ENCODE measurements at regions of chr1 and their contacts with region 1.

Region 1: GRCh38 chr1:206663832-206664652 is 20.7 kb upstream of the MAPKAPK2 start:
- DNase-seq: peak; percentile 44 to 83 (median 68)
- ATAC-seq: peak; percentile 87
- H3K4me3 ChIP-seq: no peak overlapping the region
- H3K4me3 Mint-ChIP-seq: peak overlapping the region in 4 of 10 donors; percentile 19 to 63 (median 41)
- H3K27ac ChIP-seq: no peak overlapping the region
- H3K27ac Mint-ChIP-seq: peak overlapping the region in 1 of 9 donors; percentile 15
- H3K4me1 ChIP-seq: peaks cover 0 to 9% of the 10 kb centered on the region in 2 donors
- H3K4me1 Mint-ChIP-seq: peaks cover 3 to 35% (median 9%) of the 10 kb centered on the region in 7 donors
- H3K27me3 ChIP-seq: peaks cover 0 to 6% of the 10 kb centered on the region in 2 donors
- H3K27me3 Mint-ChIP-seq: peaks cover 8 to 31% (median 21%) of the 10 kb centered on the region in 5 donors

Region 2: DNA sequence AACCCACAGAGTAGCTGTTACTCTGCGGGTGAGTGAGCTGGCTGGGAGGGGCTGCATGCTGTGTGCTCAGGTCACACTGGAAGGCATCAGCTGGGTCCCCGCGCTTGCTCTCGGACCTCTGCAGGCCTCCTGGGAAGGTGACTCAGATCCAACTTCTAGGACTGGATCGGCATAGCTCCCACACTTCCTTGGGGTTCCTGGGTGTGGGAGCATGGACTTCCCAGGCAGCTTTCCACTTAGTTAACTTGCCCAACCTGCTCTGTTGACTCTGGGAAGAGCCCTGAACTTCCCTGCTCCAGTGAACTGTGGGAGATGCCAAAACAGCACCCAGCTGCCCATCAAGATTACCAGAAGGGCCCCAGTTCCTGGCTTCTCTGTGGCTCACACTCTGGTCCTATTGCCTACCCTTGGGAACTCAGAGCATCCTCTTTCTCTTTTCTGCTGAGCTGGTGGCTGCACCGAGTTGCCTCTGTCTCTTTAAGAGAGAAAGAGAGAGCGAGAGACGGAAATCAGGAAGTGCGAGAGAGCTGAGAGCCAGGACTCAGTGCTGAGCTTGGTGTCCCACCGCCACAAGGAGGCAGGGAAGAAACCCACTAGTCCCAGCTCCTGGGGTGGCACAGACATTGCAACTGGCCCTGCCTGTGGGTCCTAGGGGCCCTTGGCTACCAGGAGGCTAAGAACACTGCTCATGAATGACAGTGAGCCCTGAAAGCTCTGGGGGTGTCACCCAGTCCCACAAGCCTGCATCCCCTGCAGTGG is 193.9 kb before region 1 on chr1 and contains the start of gene IKBKE:
- CTCF ChIA-PET with region 1: interaction called, 23 read pairs
- POLR2A ChIA-PET with region 1: no interaction called
- intact Hi-C with region 1: no loop called
- DNase-seq: peak in 8 of 9 donors; percentile 37 to 58 (median 44)
- ATAC-seq: peak; percentile 74
- H3K4me3 ChIP-seq: peak within 1 kb of the TSS; percentile 98
- H3K4me3 Mint-ChIP-seq: peak within 1 kb of the TSS; percentile 88 to 95 (median 93)
- H3K27ac ChIP-seq: peak within 1 kb of the TSS; percentile 78
- H3K27ac Mint-ChIP-seq: peak within 1 kb of the TSS; percentile 75 to 97 (median 86)
- H3K4me1 ChIP-seq: peaks cover 64 to 66% of the 10 kb centered on the region in 2 donors
- H3K4me1 Mint-ChIP-seq: peaks cover 55 to 86% (median 78%) of the 10 kb centered on the region in 7 donors
- H3K27me3 ChIP-seq: no peaks in the 10 kb centered on the region
- H3K27me3 Mint-ChIP-seq: no peaks in the 10 kb centered on the region
- total RNA-seq, gene IKBKE: 50.1 to 177 (median 79.1) TPM

Region 3: GRCh38 chr1:206489980-206490770 is 173.9 kb before region 1 on chr1:
- CTCF ChIA-PET with region 1: interaction called, 12 read pairs
- POLR2A ChIA-PET with region 1: interaction called, 4 read pairs
- intact Hi-C with region 1: loop called (anchors 1 kb)
- DNase-seq: peak; percentile 39 to 78 (median 58)
- ATAC-seq: peak; percentile 90
- H3K4me3 ChIP-seq: no peak overlapping the region
- H3K4me3 Mint-ChIP-seq: no peak overlapping the region
- H3K27ac ChIP-seq: no peak overlapping the region
- H3K27ac Mint-ChIP-seq: peak overlapping the region in 5 of 9 donors; percentile 8 to 67 (median 51)
- H3K4me1 ChIP-seq: no peaks in the 10 kb centered on the region
- H3K4me1 Mint-ChIP-seq: peaks cover 0 to 23% (median 0%) of the 10 kb centered on the region in 7 donors
- H3K27me3 ChIP-seq: no peaks in the 10 kb centered on the region
- H3K27me3 Mint-ChIP-seq: no peaks in the 10 kb centered on the region

Region 4: DNA sequence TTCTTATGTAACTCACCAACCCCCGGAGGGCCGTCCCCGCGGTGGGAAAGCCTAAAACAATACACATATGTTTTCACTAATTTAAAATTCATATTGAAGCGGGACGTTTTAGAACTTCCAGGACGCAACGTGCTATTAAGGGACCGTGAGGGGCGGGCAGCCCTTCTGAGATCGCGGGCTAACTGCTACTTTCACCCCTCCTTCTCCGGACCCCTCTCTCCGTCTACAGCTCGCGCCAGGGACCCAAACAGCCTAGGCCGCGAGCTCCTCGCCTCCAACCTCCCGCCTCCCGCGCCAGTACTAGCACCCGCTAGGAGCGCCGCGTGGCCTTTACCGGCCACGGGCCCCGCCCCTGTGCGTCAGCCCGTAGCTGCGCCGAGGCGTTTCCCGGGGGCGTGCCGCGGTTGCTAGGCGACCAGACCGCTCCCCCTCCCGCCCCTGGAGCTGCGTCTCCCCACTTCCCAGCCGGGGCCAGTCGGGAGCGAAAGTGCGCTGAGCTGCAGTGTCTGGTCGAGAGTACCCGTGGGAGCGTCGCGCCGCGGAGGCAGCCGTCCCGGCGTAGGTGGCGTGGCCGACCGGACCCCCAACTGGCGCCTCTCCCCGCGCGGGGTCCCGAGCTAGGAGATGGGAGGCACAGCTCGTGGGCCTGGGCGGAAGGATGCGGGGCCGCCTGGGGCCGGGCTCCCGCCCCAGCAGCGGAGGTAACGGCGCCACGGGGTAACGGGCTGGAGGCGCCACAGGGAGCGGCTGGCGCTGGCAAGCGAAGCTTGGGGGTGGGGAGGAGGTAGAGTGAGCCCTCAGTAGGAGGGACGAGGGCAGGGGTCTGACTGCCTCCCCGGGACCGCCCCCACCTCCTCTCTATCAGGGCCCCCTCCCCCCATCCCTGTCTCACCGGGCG is 28.7 kb before region 1 on chr1 and contains the start of gene DYRK3:
- CTCF ChIA-PET with region 1: interaction called, 53 read pairs
- POLR2A ChIA-PET with region 1: no interaction called
- intact Hi-C with region 1: loop called (anchors 1 kb)
- DNase-seq: peak; percentile 71 to 98 (median 80)
- ATAC-seq: peak; percentile 97
- H3K4me3 ChIP-seq: peak within 1 kb of the TSS; percentile 67
- H3K4me3 Mint-ChIP-seq: peak within 1 kb of the TSS; percentile 85 to 96 (median 90)
- H3K27ac ChIP-seq: peak within 1 kb of the TSS; percentile 57
- H3K27ac Mint-ChIP-seq: peak within 1 kb of the TSS; percentile 64 to 93 (median 85)
- H3K4me1 ChIP-seq: peaks cover 8 to 16% of the 10 kb centered on the region in 2 donors
- H3K4me1 Mint-ChIP-seq: peaks cover 14 to 29% (median 18%) of the 10 kb centered on the region in 7 donors
- H3K27me3 ChIP-seq: no peaks in the 10 kb centered on the region
- H3K27me3 Mint-ChIP-seq: peaks cover 7 to 13% (median 9%) of the 10 kb centered on the region in 5 donors
- total RNA-seq, gene DYRK3: 0.22 to 8.2 (median 0.69) TPM

Region 5: DNA sequence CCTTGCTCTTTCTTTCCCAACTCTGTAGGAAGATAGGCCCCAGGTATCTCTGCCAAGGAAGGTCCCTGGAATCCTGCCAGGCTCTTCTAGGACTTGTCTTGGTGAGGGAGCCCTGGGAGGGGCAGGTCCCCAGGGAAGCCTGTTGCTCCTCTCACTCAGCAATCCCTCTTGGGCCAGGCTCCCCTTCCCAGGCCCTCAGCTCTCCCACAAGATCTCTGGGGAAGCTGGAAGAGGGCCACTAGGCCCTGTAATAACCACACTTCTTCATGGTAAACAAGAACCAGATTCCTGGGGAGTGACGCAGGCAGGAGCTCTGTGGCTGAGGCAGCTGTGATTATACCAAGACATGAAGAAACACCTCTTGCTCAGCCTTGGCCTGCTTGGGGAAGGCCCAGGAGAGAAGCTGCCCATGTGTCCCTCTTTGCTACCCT is 10.7 kb after region 1 on chr1:
- CTCF ChIA-PET with region 1: interaction called, 14 read pairs
- POLR2A ChIA-PET with region 1: no interaction called
- intact Hi-C with region 1: no loop called
- DNase-seq: no peak
- ATAC-seq: no peak
- H3K4me3 ChIP-seq: no peak overlapping the region
- H3K4me3 Mint-ChIP-seq: no peak overlapping the region
- H3K27ac ChIP-seq: no peak overlapping the region
- H3K27ac Mint-ChIP-seq: no peak overlapping the region
- H3K4me1 ChIP-seq: no peaks in the 10 kb centered on the region
- H3K4me1 Mint-ChIP-seq: peaks cover 0 to 5% (median 0%) of the 10 kb centered on the region in 7 donors
- H3K27me3 ChIP-seq: no peaks in the 10 kb centered on the region
- H3K27me3 Mint-ChIP-seq: peaks cover 0 to 12% (median 5%) of the 10 kb centered on the region in 5 donors